ENCODE measurements at regions of chr3 and their contacts with region 1.

Region 1: GRCh38 chr3:159112724-159113123 is 310.9 kb downstream of the MFSD1 start:
- DNase-seq: no peak
- ATAC-seq: no peak
- H3K4me3 ChIP-seq: no peak overlapping the region
- H3K4me3 Mint-ChIP-seq: no peak overlapping the region
- H3K27ac ChIP-seq: no peak overlapping the region
- H3K27ac Mint-ChIP-seq: no peak overlapping the region
- H3K4me1 ChIP-seq: no peaks in the 10 kb centered on the region
- H3K4me1 Mint-ChIP-seq: no peaks in the 10 kb centered on the region
- H3K27me3 ChIP-seq: no peaks in the 10 kb centered on the region
- H3K27me3 Mint-ChIP-seq: peaks cover 0 to 3% of the 10 kb centered on the region in 2 donors

Region 2: DNA sequence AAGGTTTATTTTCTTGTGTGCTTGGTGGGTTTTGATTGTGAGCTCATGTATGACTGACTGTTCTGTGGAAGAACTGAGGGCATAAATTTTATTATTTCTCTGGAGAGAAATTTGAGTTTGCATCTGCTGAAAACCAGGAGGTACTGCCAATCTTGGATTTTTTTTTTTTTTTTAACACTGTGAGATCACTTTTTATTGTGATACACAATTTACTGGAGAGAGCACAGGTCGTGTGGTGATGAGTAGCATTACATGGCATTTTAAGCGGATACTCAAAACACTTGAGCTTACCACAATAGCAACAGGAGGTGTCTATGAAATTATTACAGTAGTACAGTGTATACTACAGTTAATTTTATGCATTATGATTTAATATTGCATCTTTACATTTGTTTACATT is 73.4 kb before region 1 on chr3:
- CTCF ChIA-PET with region 1: no interaction called
- POLR2A ChIA-PET with region 1: interaction called in 1 of 2 experiments, 17 read pairs
- DNase-seq: no peak
- ATAC-seq: no peak
- H3K4me3 ChIP-seq: no peak overlapping the region
- H3K4me3 Mint-ChIP-seq: no peak overlapping the region
- H3K27ac ChIP-seq: no peak overlapping the region
- H3K27ac Mint-ChIP-seq: no peak overlapping the region
- H3K4me1 ChIP-seq: no peaks in the 10 kb centered on the region
- H3K4me1 Mint-ChIP-seq: no peaks in the 10 kb centered on the region
- H3K27me3 ChIP-seq: no peaks in the 10 kb centered on the region
- H3K27me3 Mint-ChIP-seq: no peaks in the 10 kb centered on the region